Mucosa of descending colon (tissue), 3 donors: ENCODE measurements at regions of chr17 and their contacts with region 1.

Region 1: DNA sequence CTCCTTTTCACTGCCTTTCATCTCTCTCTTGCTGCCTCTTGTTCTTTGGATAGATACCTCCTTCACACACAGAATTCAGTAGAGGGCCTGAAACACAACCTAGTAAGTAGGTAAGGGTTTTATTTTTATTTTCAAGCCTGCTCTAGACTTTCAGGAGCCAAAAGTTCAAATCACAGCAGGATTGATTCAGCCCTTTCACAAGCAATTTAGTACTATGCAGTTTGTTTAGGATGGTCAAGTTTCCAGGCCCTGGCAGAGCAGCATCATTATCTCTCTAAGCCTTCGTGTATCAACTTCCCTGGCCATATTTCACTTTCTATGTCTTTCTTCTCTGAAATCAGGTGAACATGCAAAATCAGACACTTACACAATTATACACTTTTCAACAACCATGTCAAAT is 148.8 kb upstream of the CORO6 start:
- DNase-seq: no peak
- ATAC-seq: no peak
- H3K4me3 ChIP-seq: no peak overlapping the region
- H3K4me1 ChIP-seq: no peaks in the 10 kb centered on the region
- CTCF ChIP-seq: no peak

Region 2: GRCh38 chr17:29568331-29569244 is 203.0 kb before region 1 on chr17 and contains the start of gene TP53I13:
- intact Hi-C with region 1: no loop called
- DNase-seq: peak; percentile 94 to 95 (median 95)
- ATAC-seq: peak; percentile 63
- H3K4me3 ChIP-seq: peak within 1 kb of the TSS; percentile 41
- H3K4me1 ChIP-seq: peaks cover 27% of the 10 kb centered on the region
- CTCF ChIP-seq: no peak
- total RNA-seq, gene TP53I13: 43.9 to 75.4 (median 46.9) TPM

Region 3: DNA sequence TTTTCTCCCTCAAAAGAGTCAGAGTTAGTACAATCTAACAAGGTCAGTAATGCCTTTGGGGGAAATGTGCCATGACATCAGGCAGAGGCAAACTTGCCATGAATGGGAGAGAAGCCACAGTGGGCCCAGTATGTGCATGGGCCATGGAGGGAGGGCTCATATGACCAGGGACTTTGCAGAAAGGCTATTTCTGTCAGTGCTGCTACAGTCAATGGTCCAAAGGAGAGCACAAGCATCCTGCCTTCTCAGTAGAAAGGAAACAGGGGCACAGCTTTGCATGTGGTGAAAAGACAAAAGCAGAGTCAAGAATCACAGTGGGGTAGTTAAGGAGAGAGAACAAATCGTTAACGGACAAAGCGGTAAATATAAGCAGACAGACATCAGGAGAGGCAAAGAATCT is 137.7 kb before region 1 on chr17:
- intact Hi-C with region 1: loop called in 1 of 2 experiments (anchors 10 kb)
- DNase-seq: no peak
- ATAC-seq: no peak
- H3K4me3 ChIP-seq: no peak overlapping the region
- H3K4me1 ChIP-seq: no peaks in the 10 kb centered on the region
- CTCF ChIP-seq: no peak